B cell (primary cell): ENCODE measurements at regions of chrX and their contacts with region 1.

Region 1: GRCh38 chrX:102067966-102068708 is 57.3 kb upstream of the TCEAL2 start:
- DNase-seq: peak; percentile 14
- ATAC-seq: no peak
- H3K4me3 ChIP-seq: no peak overlapping the region
- H3K4me3 Mint-ChIP-seq: no peak overlapping the region
- H3K27ac ChIP-seq: no peak overlapping the region
- H3K27ac Mint-ChIP-seq: no peak overlapping the region
- H3K4me1 ChIP-seq: no peaks in the 10 kb centered on the region
- H3K4me1 Mint-ChIP-seq: no peaks in the 10 kb centered on the region
- H3K27me3 ChIP-seq: peaks cover 0 to 3% (median 0%) of the 10 kb centered on the region in 4 experiments
- H3K27me3 Mint-ChIP-seq: peaks cover 4% of the 10 kb centered on the region
- CTCF ChIP-seq: peak; percentile 58

Region 2: DNA sequence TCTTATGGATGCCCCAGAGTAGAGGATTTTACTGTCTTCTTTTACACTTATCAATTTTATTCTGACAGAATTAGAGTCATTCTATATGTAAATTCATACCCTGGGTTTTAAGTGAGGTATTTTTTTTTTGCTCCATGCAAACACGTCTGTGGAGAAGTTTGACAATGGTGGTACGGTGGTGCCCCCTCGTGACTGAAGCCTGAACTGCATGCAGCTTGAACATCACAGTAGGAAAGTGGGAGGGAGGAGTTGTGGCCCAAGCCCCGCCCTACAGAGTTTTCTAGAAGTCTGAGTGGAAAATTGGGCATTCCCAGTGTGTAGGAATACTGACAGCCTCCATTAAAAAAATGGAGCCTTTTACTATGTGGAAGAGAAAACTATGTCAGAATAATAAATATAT is 795.6 kb after region 1 on chrX:
- CTCF ChIA-PET with region 1: interaction called, 4 read pairs
- POLR2A ChIA-PET with region 1: no interaction called
- intact Hi-C with region 1: loop called (anchors 5 kb)
- DNase-seq: peak; percentile 74
- ATAC-seq: peak; percentile 98
- H3K4me3 ChIP-seq: no peak overlapping the region
- H3K4me3 Mint-ChIP-seq: no peak overlapping the region
- H3K27ac ChIP-seq: no peak overlapping the region
- H3K27ac Mint-ChIP-seq: no peak overlapping the region
- H3K4me1 ChIP-seq: no peaks in the 10 kb centered on the region
- H3K4me1 Mint-ChIP-seq: no peaks in the 10 kb centered on the region
- H3K27me3 ChIP-seq: no peaks in the 10 kb centered on the region
- H3K27me3 Mint-ChIP-seq: no peaks in the 10 kb centered on the region
- CTCF ChIP-seq: peak; percentile 82

Region 3: GRCh38 chrX:102899940-102900916 is 832.1 kb after region 1 on chrX:
- CTCF ChIA-PET with region 1: interaction called, 18 read pairs
- POLR2A ChIA-PET with region 1: no interaction called
- intact Hi-C with region 1: no loop called
- DNase-seq: peak; percentile 69
- ATAC-seq: peak; percentile 63
- H3K4me3 ChIP-seq: no peak overlapping the region
- H3K4me3 Mint-ChIP-seq: no peak overlapping the region
- H3K27ac ChIP-seq: no peak overlapping the region
- H3K27ac Mint-ChIP-seq: no peak overlapping the region
- H3K4me1 ChIP-seq: peaks cover 0 to 3% of the 10 kb centered on the region in 2 donors
- H3K4me1 Mint-ChIP-seq: peaks cover 4% of the 10 kb centered on the region
- H3K27me3 ChIP-seq: no peaks in the 10 kb centered on the region
- H3K27me3 Mint-ChIP-seq: no peaks in the 10 kb centered on the region
- CTCF ChIP-seq: peak; percentile 66

Region 4: DNA sequence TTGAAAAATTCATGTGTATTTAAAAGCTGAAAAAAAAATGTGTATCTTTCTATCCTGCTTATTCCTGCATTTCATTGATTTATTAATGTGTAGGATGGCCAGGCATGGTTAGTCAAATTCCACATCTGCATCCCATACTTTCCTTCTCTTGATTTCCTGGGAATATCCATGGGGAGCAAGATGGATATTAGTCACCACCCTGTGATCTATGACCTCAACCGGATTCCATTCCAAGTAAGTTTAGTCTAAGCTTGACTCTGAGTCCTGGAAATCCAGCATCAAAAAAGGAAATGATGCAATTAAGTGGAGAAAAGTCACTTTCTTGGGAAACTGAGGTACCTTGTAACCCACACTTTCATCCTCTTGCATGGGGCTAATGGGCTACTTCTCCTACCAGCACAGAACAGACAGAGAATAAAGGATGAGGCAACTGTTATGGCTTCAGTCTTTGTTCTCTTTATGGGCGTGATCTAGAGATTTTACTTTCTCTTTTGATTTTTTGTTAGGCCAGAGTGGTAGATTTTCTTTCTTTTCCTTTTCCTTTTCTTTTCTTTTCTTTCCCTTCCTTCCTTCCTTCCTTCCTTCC is 1129.7 kb after region 1 on chrX:
- CTCF ChIA-PET with region 1: no interaction called
- POLR2A ChIA-PET with region 1: no interaction called
- intact Hi-C with region 1: no loop called
- DNase-seq: no peak
- ATAC-seq: no peak
- H3K4me3 ChIP-seq: no peak overlapping the region
- H3K4me3 Mint-ChIP-seq: no peak overlapping the region
- H3K27ac ChIP-seq: no peak overlapping the region
- H3K27ac Mint-ChIP-seq: no peak overlapping the region
- H3K4me1 ChIP-seq: no peaks in the 10 kb centered on the region
- H3K4me1 Mint-ChIP-seq: no peaks in the 10 kb centered on the region
- H3K27me3 ChIP-seq: peaks cover 0 to 6% (median 0%) of the 10 kb centered on the region in 4 experiments
- H3K27me3 Mint-ChIP-seq: no peaks in the 10 kb centered on the region
- CTCF ChIP-seq: no peak